ENCODE measurements at regions of chr7 and their contacts with region 1.

Region 1: DNA sequence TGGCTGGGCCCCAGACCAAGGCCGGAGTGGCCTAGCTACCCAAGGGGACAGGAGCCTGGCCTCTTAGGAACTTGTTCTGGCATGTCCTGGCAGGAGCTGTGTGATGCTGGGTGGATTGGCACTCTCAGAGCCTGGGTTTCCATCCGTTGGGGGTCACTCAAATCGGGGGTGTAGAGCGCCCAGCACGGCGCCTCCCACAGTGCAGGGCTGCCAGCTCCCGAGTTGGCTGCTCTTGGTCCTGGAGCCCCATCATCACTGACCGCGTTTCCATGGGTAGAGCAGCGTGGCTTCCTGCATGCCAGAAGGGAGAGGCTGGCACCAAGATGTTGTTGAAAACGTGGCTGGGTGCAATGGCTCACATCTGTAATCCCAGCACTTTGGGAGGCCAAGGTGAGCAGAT is 70.3 kb downstream of the UNCX start:
- DNase-seq: no peak
- H3K4me3 Mint-ChIP-seq: no peak overlapping the region
- H3K27ac Mint-ChIP-seq: no peak overlapping the region
- H3K4me1 Mint-ChIP-seq: no peaks in the 10 kb centered on the region
- H3K27me3 Mint-ChIP-seq: peaks cover 67% of the 10 kb centered on the region
- CTCF ChIP-seq: no peak

Region 2: GRCh38 chr7:1473864-1474512 is 171.1 kb after region 1 on chr7:
- CTCF ChIA-PET with region 1: no interaction called
- intact Hi-C with region 1: no loop called
- DNase-seq: peak; percentile 98
- H3K4me3 Mint-ChIP-seq: no peak overlapping the region
- H3K27ac Mint-ChIP-seq: peak overlapping the region; percentile 44
- H3K4me1 Mint-ChIP-seq: no peaks in the 10 kb centered on the region
- H3K27me3 Mint-ChIP-seq: no peaks in the 10 kb centered on the region
- CTCF ChIP-seq: peak; percentile 99

Region 3: GRCh38 chr7:3065724-3066143 is 1762.8 kb after region 1 on chr7:
- CTCF ChIA-PET with region 1: interaction called, 20 read pairs
- intact Hi-C with region 1: no loop called
- DNase-seq: peak; percentile 67
- H3K4me3 Mint-ChIP-seq: no peak overlapping the region
- H3K27ac Mint-ChIP-seq: no peak overlapping the region
- H3K4me1 Mint-ChIP-seq: no peaks in the 10 kb centered on the region
- H3K27me3 Mint-ChIP-seq: peaks cover 49% of the 10 kb centered on the region
- CTCF ChIP-seq: peak; percentile 62

Measured in Calu3 (cell line).